ENCODE measurements at regions of chr11 and their contacts with region 1.

Region 1: GRCh38 chr11:119196833-119197483 is 9.2 kb upstream of the CBL start:
- DNase-seq: peak in 1 of 2 donors; percentile 73
- ATAC-seq: peak; percentile 85

Region 2: GRCh38 chr11:119144825-119145486 is 52.0 kb before region 1 on chr11:
- intact Hi-C with region 1: loop called in 1 of 2 experiments (anchors 10 kb)
- DNase-seq: peak; percentile 72 to 82
- ATAC-seq: peak; percentile 95